Transverse colon (tissue), 4 donors: ENCODE measurements at regions of chr16 and their contacts with region 1.

Region 1: GRCh38 chr16:22297114-22297878 is at the start of gene POLR3E:
- DNase-seq: peak; percentile 100
- H3K4me3 ChIP-seq: peak within 1 kb of the TSS; percentile 55 to 92 (median 80)
- H3K27ac ChIP-seq: peak within 1 kb of the TSS; percentile 96 to 97 (median 96)
- H3K4me1 ChIP-seq: peaks cover 0 to 34% (median 16%) of the 10 kb centered on the region in 4 donors
- H3K27me3 ChIP-seq: no peaks in the 10 kb centered on the region
- CTCF ChIP-seq: peak; percentile 78 to 99 (median 95)
- EP300 ChIP-seq: no peak
- POLR2A ChIP-seq: no peak
- total RNA-seq, gene POLR3E: 23.2 to 107 (median 46.0) TPM

Region 2: DNA sequence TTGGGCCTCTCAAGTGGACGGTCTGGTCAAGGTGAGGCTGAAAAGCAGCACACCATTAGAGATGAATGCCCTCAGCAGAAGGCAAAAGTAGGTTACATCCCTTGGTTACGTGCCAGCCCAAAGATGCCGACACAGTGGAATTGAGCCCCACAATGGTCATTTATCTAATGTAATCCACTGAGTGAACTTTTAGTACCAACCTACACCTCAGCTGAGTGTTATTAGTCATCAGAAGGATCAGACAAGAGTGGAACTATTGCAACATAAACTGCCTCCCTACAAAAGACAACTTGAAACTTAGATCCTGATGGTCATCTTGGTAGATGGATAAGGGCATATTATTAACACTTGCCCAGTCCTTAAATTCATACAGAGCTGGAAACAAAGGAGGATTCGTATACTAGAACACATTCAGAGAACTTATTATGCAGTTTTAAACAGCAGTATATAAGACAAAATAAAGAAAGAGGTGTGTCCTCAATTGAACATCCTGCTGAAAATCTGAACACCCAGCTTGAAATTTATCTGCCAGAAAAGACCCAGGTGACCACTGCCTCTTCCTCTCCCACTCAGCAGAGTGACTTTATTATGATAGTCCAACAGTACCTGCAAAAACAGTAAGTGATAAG is 1399.9 kb before region 1 on chr16:
- in situ Hi-C with region 1: no loop called
- intact Hi-C with region 1: no loop called
- DNase-seq: no peak
- H3K4me3 ChIP-seq: no peak overlapping the region
- H3K27ac ChIP-seq: peak overlapping the region in 1 of 4 donors; percentile 97
- H3K4me1 ChIP-seq: peaks cover 7 to 32% (median 24%) of the 10 kb centered on the region in 4 donors
- H3K27me3 ChIP-seq: no peaks in the 10 kb centered on the region
- CTCF ChIP-seq: no peak
- EP300 ChIP-seq: no peak
- POLR2A ChIP-seq: no peak

Region 3: DNA sequence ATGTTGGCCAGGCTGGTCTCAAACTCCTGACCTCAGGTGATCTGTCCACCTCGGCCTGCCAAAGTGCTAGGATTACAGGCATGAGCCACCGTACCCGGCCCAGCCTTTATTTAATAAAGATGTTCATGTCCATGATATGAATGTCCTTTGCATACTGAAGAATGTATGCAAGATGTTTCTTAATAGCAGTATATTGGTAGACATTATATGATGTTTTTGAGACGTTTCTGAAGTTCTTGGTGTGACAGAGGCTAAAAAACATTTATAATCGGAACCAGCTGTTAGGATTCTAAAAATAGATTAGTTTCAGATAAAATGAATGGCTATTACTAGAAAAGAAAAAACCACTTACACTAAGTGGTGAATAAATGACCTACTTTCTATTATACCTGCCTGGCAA is 308.2 kb before region 1 on chr16:
- in situ Hi-C with region 1: loop called in 2 of 4 experiments (anchors 10 to 25 kb)
- intact Hi-C with region 1: no loop called
- DNase-seq: no peak
- H3K4me3 ChIP-seq: no peak overlapping the region
- H3K27ac ChIP-seq: no peak overlapping the region
- H3K4me1 ChIP-seq: peaks cover 0 to 9% (median 3%) of the 10 kb centered on the region in 4 donors
- H3K27me3 ChIP-seq: no peaks in the 10 kb centered on the region
- CTCF ChIP-seq: no peak
- EP300 ChIP-seq: no peak
- POLR2A ChIP-seq: no peak

Region 4: GRCh38 chr16:22001591-22001990 is 295.7 kb before region 1 on chr16:
- in situ Hi-C with region 1: loop called in 3 of 4 experiments (anchors 10 to 25 kb)
- intact Hi-C with region 1: loop called (anchors 5 kb)
- DNase-seq: no peak
- H3K4me3 ChIP-seq: no peak overlapping the region
- H3K27ac ChIP-seq: no peak overlapping the region
- H3K4me1 ChIP-seq: peaks cover 0 to 21% (median 8%) of the 10 kb centered on the region in 4 donors
- H3K27me3 ChIP-seq: no peaks in the 10 kb centered on the region
- CTCF ChIP-seq: no peak
- EP300 ChIP-seq: no peak
- POLR2A ChIP-seq: no peak

Region 5: DNA sequence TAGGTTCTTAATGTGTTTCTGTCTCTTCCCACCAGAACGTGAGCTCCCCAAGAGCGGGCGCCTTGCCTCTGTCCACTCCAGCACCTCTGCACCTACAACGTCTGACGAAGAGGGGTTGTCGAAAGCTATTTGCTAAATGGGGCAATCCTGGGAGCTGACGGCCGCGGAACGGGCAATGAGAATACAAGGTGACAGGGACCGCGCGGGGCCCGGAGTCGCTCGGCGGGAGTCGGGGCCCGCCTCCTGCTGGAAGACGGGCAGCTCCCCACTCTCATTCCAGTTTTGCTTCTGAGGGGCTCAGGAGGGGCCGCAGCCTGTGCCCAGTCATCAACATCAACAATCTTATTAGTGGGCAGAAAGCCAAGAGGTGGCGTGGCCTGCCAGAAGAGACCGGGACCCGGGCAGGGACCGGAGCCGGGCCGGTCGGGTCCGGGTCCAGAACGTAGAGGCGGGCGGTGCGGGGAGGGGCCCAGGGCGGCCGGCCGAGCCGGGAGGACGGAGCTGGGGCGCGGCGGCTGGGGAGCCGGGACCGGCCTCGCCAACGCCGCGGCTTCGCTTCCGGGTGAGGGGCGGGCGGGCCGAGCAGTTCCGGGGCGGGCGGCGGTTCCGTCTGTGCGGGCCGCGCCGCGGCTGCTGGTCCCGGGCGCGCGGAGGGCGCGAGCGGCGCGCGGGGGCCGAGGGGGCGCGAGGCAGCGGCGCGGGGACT is 289.6 kb before region 1 on chr16 and contains the start of gene MOSMO:
- in situ Hi-C with region 1: loop called in 1 of 4 experiments (anchors 25 kb)
- intact Hi-C with region 1: loop called (anchors 5 kb)
- DNase-seq: peak; percentile 79
- H3K4me3 ChIP-seq: peak within 1 kb of the TSS; percentile 87 to 99 (median 98)
- H3K27ac ChIP-seq: peak within 1 kb of the TSS; percentile 89 to 94 (median 91)
- H3K4me1 ChIP-seq: peaks cover 7 to 40% (median 25%) of the 10 kb centered on the region in 4 donors
- H3K27me3 ChIP-seq: no peaks in the 10 kb centered on the region
- CTCF ChIP-seq: peak in 4 of 5 experiments; percentile 11 to 19 (median 14)
- EP300 ChIP-seq: no peak
- POLR2A ChIP-seq: peak; percentile 33
- total RNA-seq, gene MOSMO: 8.4 to 68.5 (median 17.2) TPM

Region 6: GRCh38 chr16:22195695-22196558 is 101.4 kb before region 1 on chr16:
- in situ Hi-C with region 1: loop called in 3 of 4 experiments (anchors 5 to 10 kb)
- intact Hi-C with region 1: no loop called
- DNase-seq: peak; percentile 94
- H3K4me3 ChIP-seq: peak overlapping the region; percentile 30 to 62 (median 34)
- H3K27ac ChIP-seq: peak overlapping the region; percentile 72 to 85 (median 80)
- H3K4me1 ChIP-seq: peaks cover 7 to 46% (median 13%) of the 10 kb centered on the region in 4 donors
- H3K27me3 ChIP-seq: no peaks in the 10 kb centered on the region
- CTCF ChIP-seq: peak; percentile 84 to 99 (median 94)
- EP300 ChIP-seq: no peak
- POLR2A ChIP-seq: peak; percentile 43

Region 7: GRCh38 chr16:22206013-22206841 is 91.1 kb before region 1 on chr16 and contains the start of gene EEF2K:
- in situ Hi-C with region 1: loop called in 3 of 4 experiments (anchors 5 to 10 kb)
- intact Hi-C with region 1: loop called (anchors 2 kb)
- DNase-seq: peak; percentile 95
- H3K4me3 ChIP-seq: peak within 1 kb of the TSS; percentile 69 to 95 (median 84)
- H3K27ac ChIP-seq: peak within 1 kb of the TSS; percentile 90 to 97 (median 94)
- H3K4me1 ChIP-seq: peaks cover 17 to 52% (median 31%) of the 10 kb centered on the region in 4 donors
- H3K27me3 ChIP-seq: no peaks in the 10 kb centered on the region
- CTCF ChIP-seq: peak; percentile 72 to 97 (median 86)
- EP300 ChIP-seq: no peak
- POLR2A ChIP-seq: peak; percentile 60
- total RNA-seq, gene EEF2K: 22.2 to 223 (median 50.1) TPM